Posterior vena cava (tissue), 2 donors: ENCODE measurements at regions of chr2 and their contacts with region 1.

Region 1: GRCh38 chr2:179513181-179513580 is 248.5 kb upstream of the SESTD1 start:
- DNase-seq: no peak

Region 2: GRCh38 chr2:177740700-177741099 is 1772.5 kb before region 1 on chr2:
- intact Hi-C with region 1: loop called in 1 of 2 experiments (anchors 10 kb)
- DNase-seq: no peak